ENCODE measurements at regions of chr11 and their contacts with region 1.

Region 1: GRCh38 chr11:65477149-65477965 is 21.5 kb upstream of the MALAT1 start:
- DNase-seq: peak; percentile 97
- ATAC-seq: peak; percentile 86 to 92 (median 92)
- H3K4me3 ChIP-seq: peak overlapping the region; percentile 54 to 92 (median 73)
- H3K27ac ChIP-seq: peak overlapping the region; percentile 95 to 100 (median 100)
- H3K4me1 ChIP-seq: peaks cover 16 to 72% (median 61%) of the 10 kb centered on the region in 9 donors
- H3K27me3 ChIP-seq: no peaks in the 10 kb centered on the region
- CTCF ChIP-seq: no peak

Region 2: GRCh38 chr11:65340226-65340625 is 137.1 kb before region 1 on chr11:
- intact Hi-C with region 1: no loop called
- DNase-seq: no peak
- ATAC-seq: no peak
- H3K4me3 ChIP-seq: no peak overlapping the region
- H3K27ac ChIP-seq: no peak overlapping the region
- H3K4me1 ChIP-seq: peaks cover 3 to 57% (median 28%) of the 10 kb centered on the region in 9 donors
- H3K27me3 ChIP-seq: no peaks in the 10 kb centered on the region
- CTCF ChIP-seq: no peak

Region 3: DNA sequence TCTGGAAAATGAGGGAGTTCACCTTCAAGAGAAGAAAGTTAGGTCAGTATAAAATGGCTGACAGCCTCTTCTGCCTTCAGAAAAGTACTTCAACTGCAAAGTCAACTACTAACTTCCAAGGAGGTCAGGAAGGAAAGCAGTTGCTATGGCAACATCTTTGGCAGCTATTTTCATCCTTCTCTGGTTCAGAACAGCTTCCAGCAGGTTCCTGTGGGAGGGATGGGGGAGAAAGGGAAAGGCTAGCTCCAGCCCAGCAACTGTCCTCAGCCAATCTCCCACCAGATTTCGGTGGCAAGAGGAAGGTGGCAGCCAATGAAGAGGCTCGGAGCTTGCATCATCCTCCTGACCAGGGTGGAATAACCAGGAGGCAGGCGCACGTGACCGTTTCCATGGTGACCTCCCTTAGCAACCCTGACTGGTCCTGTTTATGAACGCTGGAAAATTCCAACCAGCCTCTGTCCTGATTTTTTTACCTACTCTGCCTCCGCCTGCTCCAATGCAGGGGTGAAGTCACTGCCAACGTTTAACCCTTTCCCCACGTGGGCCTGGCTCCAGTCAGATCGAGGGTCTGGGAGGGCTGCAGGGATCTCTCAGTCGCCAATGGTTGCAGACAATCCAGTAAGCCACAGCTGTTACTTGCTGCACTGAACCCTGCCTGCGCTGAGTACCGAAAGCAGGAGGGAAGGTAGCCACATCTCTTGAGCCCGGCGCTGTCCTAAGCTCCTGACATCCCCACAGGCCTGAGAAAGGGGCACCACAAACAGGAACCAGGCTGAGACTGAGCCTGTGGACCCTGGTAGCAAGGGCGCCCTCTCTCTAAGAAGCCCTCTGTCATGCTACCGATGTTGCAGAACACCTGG is 10.3 kb after region 1 on chr11:
- intact Hi-C with region 1: loop called in 3 of 10 experiments (anchors 1 to 2 kb)
- DNase-seq: peak; percentile 93 to 99
- ATAC-seq: peak; percentile 83 to 90 (median 89)
- H3K4me3 ChIP-seq: peak overlapping the region in 8 of 10 donors; percentile 9 to 41 (median 25)
- H3K27ac ChIP-seq: peak overlapping the region; percentile 88 to 100 (median 99)
- H3K4me1 ChIP-seq: peaks cover 56 to 77% (median 72%) of the 10 kb centered on the region in 9 donors
- H3K27me3 ChIP-seq: no peaks in the 10 kb centered on the region
- CTCF ChIP-seq: no peak

Region 4: GRCh38 chr11:65497141-65498041 is 20.0 kb after region 1 on chr11:
- intact Hi-C with region 1: loop called in 6 of 10 experiments (anchors 1 to 2 kb)
- DNase-seq: peak; percentile 99
- ATAC-seq: peak; percentile 77 to 93 (median 85)
- H3K4me3 ChIP-seq: peak overlapping the region; percentile 68 to 88 (median 84)
- H3K27ac ChIP-seq: peak overlapping the region; percentile 97 to 100 (median 99)
- H3K4me1 ChIP-seq: peaks cover 34 to 56% (median 47%) of the 10 kb centered on the region in 9 donors
- H3K27me3 ChIP-seq: no peaks in the 10 kb centered on the region
- CTCF ChIP-seq: no peak

Measured in heart right ventricle (tissue), 16 donors.